Heart right ventricle (tissue), 16 donors: ENCODE measurements at regions of chr10 and their contacts with region 1.

Region 1: DNA sequence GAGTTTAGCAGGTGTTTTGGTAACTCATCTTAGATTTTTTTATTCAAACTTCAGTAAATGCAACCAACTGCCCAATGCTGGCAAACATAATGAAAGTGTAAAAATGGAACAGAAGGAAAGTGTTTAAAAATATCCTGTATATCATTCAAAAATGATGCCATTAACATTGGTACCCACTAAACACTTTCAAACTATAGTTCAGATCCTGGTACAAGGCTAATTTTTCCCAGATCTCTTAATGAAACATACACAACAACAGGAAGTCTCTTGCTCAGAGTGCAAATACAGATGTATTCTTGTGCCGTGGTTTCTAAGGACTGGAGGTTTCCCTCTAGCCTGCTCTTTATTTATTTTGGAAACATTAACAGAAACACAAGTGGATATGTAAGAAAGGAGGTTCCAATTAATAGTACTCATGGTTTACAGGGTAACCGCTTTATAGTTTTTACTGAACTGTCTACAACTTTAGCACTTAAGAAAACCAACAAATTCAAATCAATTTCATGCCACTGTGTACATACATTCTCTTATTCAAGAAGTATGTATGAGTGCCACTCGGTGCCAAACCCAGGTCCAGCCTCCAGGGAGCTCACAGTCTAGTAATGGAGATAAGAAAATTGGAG is 176.0 kb upstream of the AKR1E2 start:
- DNase-seq: no peak
- ATAC-seq: peak in 6 of 8 donors; percentile 53 to 85 (median 72)
- H3K4me3 ChIP-seq: no peak overlapping the region
- H3K27ac ChIP-seq: peak overlapping the region; percentile 1 to 81 (median 56)
- H3K4me1 ChIP-seq: peaks cover 0 to 51% (median 42%) of the 10 kb centered on the region in 9 donors
- H3K27me3 ChIP-seq: no peaks in the 10 kb centered on the region
- CTCF ChIP-seq: no peak

Region 2: DNA sequence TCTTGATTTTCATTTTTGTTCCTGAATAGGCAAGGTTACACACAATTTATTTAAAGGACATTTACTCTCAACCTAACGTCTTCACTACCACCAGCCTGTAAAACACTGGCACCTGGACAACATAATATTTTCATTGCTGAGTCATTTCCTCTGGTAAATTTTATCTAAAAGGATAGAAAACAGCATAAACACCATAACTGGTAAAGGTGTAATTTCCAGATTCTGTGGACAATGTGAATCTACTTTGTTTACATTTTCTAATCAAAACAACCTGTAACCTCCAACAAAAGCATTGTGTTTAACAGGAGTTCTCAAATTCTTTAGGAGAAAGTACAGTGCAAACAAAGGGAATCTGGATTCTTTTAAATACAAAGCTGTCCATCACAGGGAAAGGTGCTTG is 296.0 kb before region 1 on chr10:
- intact Hi-C with region 1: loop called in 3 of 10 experiments (anchors 10 kb)
- DNase-seq: no peak
- ATAC-seq: peak in 1 of 8 donors; percentile 24
- H3K4me3 ChIP-seq: no peak overlapping the region
- H3K27ac ChIP-seq: peak overlapping the region in 3 of 10 donors; percentile 6 to 44 (median 44)
- H3K4me1 ChIP-seq: peaks cover 0 to 30% (median 21%) of the 10 kb centered on the region in 9 donors
- H3K27me3 ChIP-seq: no peaks in the 10 kb centered on the region
- CTCF ChIP-seq: no peak